Activated B cell treated with CpG ODN at 0.5 μM for 24 hours (primary cell): ENCODE measurements at regions of chr19 and their contacts with region 1.

Region 1: GRCh38 chr19:36796076-36796992 is 23.7 kb upstream of the ZNF850 start:
- DNase-seq: no peak
- ATAC-seq: no peak
- H3K4me3 Mint-ChIP-seq: peak overlapping the region; percentile 96
- H3K27ac Mint-ChIP-seq: peak overlapping the region; percentile 99
- H3K4me1 Mint-ChIP-seq: peaks cover 24% of the 10 kb centered on the region
- H3K27me3 Mint-ChIP-seq: peaks cover 4% of the 10 kb centered on the region
- CTCF ChIP-seq: no peak

Region 2: DNA sequence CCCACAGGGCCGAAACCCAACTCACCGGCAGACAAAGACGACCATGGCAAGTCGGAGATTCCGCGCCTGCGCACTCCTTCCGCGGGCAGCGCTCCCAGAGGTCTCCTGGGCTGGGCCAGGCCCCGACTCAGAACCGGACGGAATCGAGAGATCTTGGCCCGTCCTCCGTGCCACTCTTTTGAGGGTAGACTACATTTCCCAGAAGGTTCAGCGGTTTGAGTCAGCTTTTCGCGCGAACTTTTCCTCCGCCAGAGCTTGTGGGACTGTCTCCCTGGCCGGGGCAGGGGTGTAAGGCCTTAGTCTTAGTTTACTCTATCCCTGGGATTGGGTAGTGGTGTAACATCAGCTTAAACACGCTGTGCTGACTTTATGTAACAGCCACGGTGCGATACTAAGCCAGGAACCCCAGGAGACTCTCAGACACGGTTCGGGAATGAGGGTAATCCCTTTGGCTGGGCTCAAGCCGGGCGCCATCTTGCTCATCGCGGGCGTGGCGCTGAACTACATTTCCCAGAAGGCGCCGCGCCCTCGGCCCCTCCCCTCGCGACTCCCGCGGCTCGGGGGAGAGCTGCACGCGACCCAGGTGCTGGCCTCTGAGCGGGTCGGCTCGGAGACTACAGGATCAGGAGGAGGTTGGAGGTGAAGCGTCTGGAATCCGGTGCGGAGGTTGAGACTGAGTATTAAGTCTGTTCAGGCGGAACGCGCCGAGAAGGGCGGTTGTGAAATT is 268.0 kb before region 1 on chr19 and contains the start of gene ZNF260:
- CTCF ChIA-PET with region 1: no interaction called
- POLR2A ChIA-PET with region 1: interaction called, 10 read pairs
- intact Hi-C with region 1: no loop called
- DNase-seq: peak; percentile 94
- ATAC-seq: peak; percentile 89
- H3K4me3 Mint-ChIP-seq: peak within 1 kb of the TSS; percentile 99
- H3K27ac Mint-ChIP-seq: peak within 1 kb of the TSS; percentile 99
- H3K4me1 Mint-ChIP-seq: peaks cover 27% of the 10 kb centered on the region
- H3K27me3 Mint-ChIP-seq: no peaks in the 10 kb centered on the region
- CTCF ChIP-seq: no peak
- total RNA-seq, gene ZNF260: 9.8 and 13.6 TPM in 2 replicates

Region 3: DNA sequence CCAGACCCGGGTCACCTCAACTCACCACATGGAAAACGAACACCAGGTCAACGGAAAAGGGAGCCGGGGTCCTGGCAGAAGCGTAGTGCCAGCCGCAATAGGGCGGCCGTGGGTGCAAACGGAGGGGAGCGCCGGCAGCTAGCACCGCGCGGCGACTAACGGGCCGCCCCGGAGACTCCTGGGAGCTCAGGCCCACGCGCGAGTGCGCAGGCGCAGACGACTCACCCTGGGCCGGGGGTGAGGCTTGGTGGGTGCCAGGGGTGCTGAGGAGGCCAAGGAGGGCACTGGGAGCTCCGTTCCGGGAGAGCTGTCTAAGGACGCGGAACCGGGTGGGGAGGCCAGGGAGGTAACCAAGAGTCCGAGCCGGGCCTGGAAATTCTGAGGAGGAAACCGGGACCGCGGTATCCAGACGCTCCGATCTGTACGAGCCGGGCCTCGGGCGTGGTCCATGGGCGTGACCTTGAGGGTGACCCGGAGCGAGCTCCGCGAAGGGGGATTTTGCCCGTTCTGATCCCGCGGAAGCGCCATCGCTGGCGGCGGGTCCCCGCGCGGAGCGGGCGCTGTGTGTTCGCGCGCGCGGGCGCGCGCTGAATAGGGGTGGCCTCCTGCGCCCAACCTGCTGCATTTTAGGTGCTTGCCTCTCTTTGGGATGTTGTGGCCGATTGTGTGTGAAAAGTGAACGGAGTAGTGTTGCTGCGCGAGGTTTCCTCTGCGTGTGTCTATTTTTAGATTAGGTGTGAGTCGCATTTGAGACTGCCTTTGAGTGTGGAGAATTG is 191.0 kb before region 1 on chr19 and contains the start of gene ZNF382:
- CTCF ChIA-PET with region 1: no interaction called
- POLR2A ChIA-PET with region 1: interaction called, 5 read pairs
- intact Hi-C with region 1: loop called (anchors 10 kb)
- DNase-seq: peak; percentile 85
- ATAC-seq: peak; percentile 80
- H3K4me3 Mint-ChIP-seq: peak within 1 kb of the TSS; percentile 97
- H3K27ac Mint-ChIP-seq: peak within 1 kb of the TSS; percentile 97
- H3K4me1 Mint-ChIP-seq: peaks cover 28% of the 10 kb centered on the region
- H3K27me3 Mint-ChIP-seq: no peaks in the 10 kb centered on the region
- CTCF ChIP-seq: no peak
- total RNA-seq, gene ZNF382: 11.5 and 14.4 TPM in 2 replicates

Region 4: GRCh38 chr19:36772311-36773222 is 23.8 kb before region 1 on chr19 and contains the start of gene ZNF850:
- CTCF ChIA-PET with region 1: interaction called, 4 read pairs
- POLR2A ChIA-PET with region 1: interaction called, 9 read pairs
- intact Hi-C with region 1: loop called (anchors 1 kb)
- DNase-seq: peak; percentile 89
- ATAC-seq: peak; percentile 92
- H3K4me3 Mint-ChIP-seq: peak within 1 kb of the TSS; percentile 92
- H3K27ac Mint-ChIP-seq: peak within 1 kb of the TSS; percentile 85
- H3K4me1 Mint-ChIP-seq: peaks cover 24% of the 10 kb centered on the region
- H3K27me3 Mint-ChIP-seq: no peaks in the 10 kb centered on the region
- CTCF ChIP-seq: no peak
- total RNA-seq, gene ZNF850: 5.8 and 7.9 TPM in 2 replicates

Region 5: GRCh38 chr19:36915992-36916830 is 119.9 kb after region 1 on chr19 and contains the starts of genes ZNF568 and ZNF829:
- CTCF ChIA-PET with region 1: no interaction called
- POLR2A ChIA-PET with region 1: interaction called, 4 read pairs
- intact Hi-C with region 1: loop called (anchors 1 kb)
- DNase-seq: peak; percentile 87
- ATAC-seq: peak; percentile 93
- H3K4me3 Mint-ChIP-seq: peak within 1 kb of the TSS; percentile 91
- H3K27ac Mint-ChIP-seq: peak within 1 kb of the TSS; percentile 91
- H3K4me1 Mint-ChIP-seq: peaks cover 26% of the 10 kb centered on the region
- H3K27me3 Mint-ChIP-seq: no peaks in the 10 kb centered on the region
- CTCF ChIP-seq: no peak
- total RNA-seq, gene ZNF568: 12.0 and 13.4 TPM in 2 replicates
- total RNA-seq, gene ZNF829: 7.3 and 7.6 TPM in 2 replicates